ENCODE measurements at regions of chr18 and their contacts with region 1.

Region 1: GRCh38 chr18:29378651-29379136 is 1201.8 kb upstream of the CDH2 start:
- DNase-seq: no peak
- H3K4me3 Mint-ChIP-seq: no peak overlapping the region
- H3K27ac Mint-ChIP-seq: no peak overlapping the region
- H3K4me1 Mint-ChIP-seq: no peaks in the 10 kb centered on the region
- H3K27me3 Mint-ChIP-seq: no peaks in the 10 kb centered on the region
- CTCF ChIP-seq: no peak

Region 2: GRCh38 chr18:29164020-29164706 is 214.5 kb before region 1 on chr18:
- CTCF ChIA-PET with region 1: no interaction called
- intact Hi-C with region 1: loop called (anchors 10 kb)
- DNase-seq: no peak
- H3K4me3 Mint-ChIP-seq: peak overlapping the region; percentile 30
- H3K27ac Mint-ChIP-seq: peak overlapping the region; percentile 96
- H3K4me1 Mint-ChIP-seq: peaks cover 66% of the 10 kb centered on the region
- H3K27me3 Mint-ChIP-seq: no peaks in the 10 kb centered on the region
- CTCF ChIP-seq: no peak

Region 3: GRCh38 chr18:29741461-29741860 is 362.8 kb after region 1 on chr18:
- CTCF ChIA-PET with region 1: no interaction called
- intact Hi-C with region 1: no loop called
- DNase-seq: no peak
- H3K4me3 Mint-ChIP-seq: no peak overlapping the region
- H3K27ac Mint-ChIP-seq: no peak overlapping the region
- H3K4me1 Mint-ChIP-seq: no peaks in the 10 kb centered on the region
- H3K27me3 Mint-ChIP-seq: no peaks in the 10 kb centered on the region
- CTCF ChIP-seq: no peak